Ascending aorta (tissue), 2 donors: ENCODE measurements at regions of chr16 and their contacts with region 1.

Region 1: DNA sequence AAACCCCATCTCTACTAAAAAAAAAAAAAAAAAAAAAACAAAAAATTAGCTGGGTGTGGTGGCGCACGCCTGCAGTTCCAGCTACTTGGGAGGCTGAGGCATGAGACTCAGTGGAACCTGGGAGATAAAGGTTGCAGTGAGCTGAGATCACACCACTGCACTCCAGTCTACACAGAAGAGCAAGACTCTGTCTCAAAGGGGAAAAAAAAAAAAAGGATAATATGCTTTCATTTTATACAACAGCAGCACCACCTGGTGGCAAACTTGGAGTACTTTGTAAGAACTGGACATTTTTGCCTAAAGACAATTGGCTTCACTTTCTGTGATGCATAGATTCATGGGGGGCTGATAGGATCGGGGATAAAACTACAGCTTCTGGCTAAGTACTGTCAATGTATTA is 8.5 kb downstream of the CHTF8 start:
- DNase-seq: no peak
- H3K4me3 ChIP-seq: no peak overlapping the region
- H3K27ac ChIP-seq: no peak overlapping the region
- H3K4me1 ChIP-seq: no peaks in the 10 kb centered on the region
- H3K27me3 ChIP-seq: no peaks in the 10 kb centered on the region
- CTCF ChIP-seq: peak; percentile 36 to 63 (median 37)

Region 2: GRCh38 chr16:68528686-68529379 is 595.1 kb before region 1 on chr16:
- intact Hi-C with region 1: loop called (anchors 2 kb)
- DNase-seq: peak; percentile 33 to 88
- H3K4me3 ChIP-seq: peak overlapping the region in 1 of 2 donors; percentile 73
- H3K27ac ChIP-seq: no peak overlapping the region
- H3K4me1 ChIP-seq: peaks cover 3 to 12% of the 10 kb centered on the region in 2 donors
- H3K27me3 ChIP-seq: no peaks in the 10 kb centered on the region
- CTCF ChIP-seq: peak; percentile 88 to 91 (median 90)

Region 3: DNA sequence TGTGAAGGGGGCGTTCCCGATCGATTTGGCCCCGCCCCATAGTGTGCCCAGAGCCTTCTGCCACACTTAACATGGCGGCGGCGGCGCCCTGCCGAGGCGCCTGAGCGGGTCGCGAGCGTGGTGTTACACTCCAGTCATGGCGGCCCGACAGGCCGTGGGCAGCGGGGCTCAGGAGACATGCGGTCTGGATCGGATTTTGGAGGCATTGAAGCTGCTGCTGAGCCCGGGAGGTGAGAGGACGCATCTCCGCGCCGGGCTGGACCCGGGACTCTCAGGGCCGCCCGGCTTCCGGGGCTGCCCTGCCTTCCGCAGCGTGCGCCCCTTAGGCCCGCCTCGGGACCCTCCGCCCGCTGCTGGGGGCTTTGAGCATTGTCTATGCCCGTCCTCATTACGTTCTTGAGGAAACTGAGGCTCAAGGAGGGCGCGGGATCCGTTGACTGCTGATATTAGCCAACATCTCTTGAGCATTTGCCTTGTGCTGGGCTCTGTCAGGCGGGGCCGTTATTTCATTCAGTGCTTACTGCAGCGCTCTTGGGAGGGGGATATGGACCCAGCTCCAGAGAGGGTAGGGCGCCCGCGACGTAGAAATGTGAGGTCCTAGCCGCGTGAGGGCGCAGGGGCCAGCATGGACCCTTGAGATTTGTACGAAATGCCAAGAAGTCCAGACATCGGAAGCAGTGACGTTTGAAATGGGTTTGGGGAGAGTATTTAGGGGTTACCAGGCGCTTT is 280.3 kb before region 1 on chr16 and contains the start of gene TANGO6:
- intact Hi-C with region 1: loop called (anchors 2 kb)
- DNase-seq: peak; percentile 40 to 91
- H3K4me3 ChIP-seq: peak within 1 kb of the TSS; percentile 85 to 97
- H3K27ac ChIP-seq: peak within 1 kb of the TSS; percentile 87 to 94
- H3K4me1 ChIP-seq: no peaks in the 10 kb centered on the region
- H3K27me3 ChIP-seq: no peaks in the 10 kb centered on the region
- CTCF ChIP-seq: no peak
- total RNA-seq, gene TANGO6: 3.7 TPM

Region 4: DNA sequence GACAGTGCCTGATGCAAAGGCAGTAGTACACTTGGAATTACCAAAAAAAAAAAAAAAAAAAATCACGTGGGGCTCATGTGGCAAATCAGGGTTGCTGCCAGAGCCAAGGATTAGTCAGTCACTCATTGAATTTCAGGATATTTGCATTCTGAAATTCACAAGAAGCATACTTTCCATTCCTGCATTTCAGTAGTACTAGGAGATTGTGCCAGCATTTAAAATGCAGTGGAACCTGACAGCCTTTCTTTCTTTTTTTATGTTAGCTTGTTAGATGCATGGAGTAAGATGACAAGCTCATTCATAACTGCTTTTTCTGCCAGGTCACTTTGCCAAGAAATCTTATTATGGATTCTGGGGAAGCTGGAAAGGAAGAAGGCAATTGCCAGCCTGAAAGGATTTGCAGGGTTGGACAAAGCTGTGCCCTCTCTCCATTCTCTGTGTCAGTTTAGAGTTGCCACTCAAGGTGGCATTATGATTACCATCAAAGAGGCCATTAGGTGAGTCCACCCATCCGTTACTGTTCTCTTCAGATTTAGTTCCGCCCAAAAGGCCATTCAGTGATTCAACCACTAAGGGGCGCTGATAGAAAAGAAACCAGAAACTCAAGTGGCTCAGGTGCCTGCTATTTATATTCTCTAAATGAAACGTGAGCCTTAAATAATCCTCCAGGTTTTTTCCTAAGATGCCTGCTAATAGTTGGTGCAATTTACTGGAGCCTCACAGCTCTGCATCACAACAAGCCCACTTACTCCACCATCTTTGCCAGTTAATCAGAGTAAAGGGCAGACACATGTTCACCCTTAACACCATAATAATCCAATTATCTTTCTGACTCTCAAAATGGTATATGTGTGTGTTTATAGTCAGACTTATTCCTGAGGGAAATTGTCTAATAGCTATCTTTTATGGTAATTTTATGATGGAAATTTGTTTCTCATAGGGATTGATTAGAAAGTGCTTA is 221.6 kb before region 1 on chr16:
- intact Hi-C with region 1: loop called (anchors 2 kb)
- DNase-seq: no peak
- H3K4me3 ChIP-seq: no peak overlapping the region
- H3K27ac ChIP-seq: no peak overlapping the region
- H3K4me1 ChIP-seq: no peaks in the 10 kb centered on the region
- H3K27me3 ChIP-seq: no peaks in the 10 kb centered on the region
- CTCF ChIP-seq: peak; percentile 12 to 52 (median 40)